A549 (cell line): ENCODE measurements at regions of chr20 and their contacts with region 1.

Region 1: DNA sequence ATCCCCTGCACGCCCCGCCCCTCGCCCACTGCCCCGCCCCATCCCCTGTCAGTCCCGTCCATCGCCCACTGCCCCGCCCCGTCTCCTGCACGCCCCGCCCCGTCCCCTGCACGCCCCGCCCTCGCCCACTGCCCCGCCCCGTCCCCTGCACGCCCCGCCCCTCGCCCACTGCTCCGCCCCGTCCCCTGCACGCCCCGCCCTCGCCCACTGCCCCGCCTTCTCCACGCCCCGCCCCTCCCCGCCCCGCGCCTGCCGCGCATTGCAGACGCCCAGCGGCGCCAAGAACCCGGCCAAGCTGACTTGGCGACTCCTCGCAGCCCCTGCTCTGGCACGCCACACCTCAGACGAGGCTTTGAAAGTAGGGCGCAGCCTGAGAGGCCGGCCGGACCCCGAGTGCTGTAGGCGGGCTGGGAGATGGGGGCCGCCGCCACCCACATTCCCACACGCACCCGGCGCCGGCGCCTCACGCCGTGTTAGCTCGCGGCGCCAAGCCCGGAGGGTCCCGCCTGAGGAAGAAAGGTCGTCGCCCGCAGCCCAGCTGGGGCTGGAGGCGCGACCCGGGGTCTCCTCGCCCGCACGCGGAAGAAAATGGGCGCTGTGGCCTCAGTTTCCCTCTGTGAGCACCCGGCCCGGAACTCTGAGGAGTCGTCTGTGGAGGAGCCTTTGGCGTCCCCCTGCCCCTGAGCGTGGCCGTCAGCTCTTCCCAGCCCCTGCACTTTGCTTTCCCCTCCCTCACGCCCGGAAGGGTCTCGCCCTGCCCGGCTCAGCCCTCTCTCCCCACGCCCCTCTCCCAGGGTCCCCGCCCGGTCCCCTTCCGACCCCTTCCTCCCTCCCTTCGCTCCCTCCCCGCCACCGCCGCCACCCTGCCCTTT is at the start of gene RAD21L1:
- DNase-seq: peak; percentile 86 to 87
- ATAC-seq: peak; percentile 86 to 88
- H3K4me3 ChIP-seq: peak within 1 kb of the TSS; percentile 87
- H3K27ac ChIP-seq: peak within 1 kb of the TSS; percentile 77 to 88
- H3K4me1 ChIP-seq: no peaks in the 10 kb centered on the region
- CTCF ChIP-seq: no peak
- EP300 ChIP-seq: no peak
- POLR2A ChIP-seq: peak; percentile 72
- RAD21 ChIP-seq: no peak
- polyA plus RNA-seq, gene RAD21L1: not detected in 2 replicates

Region 2: DNA sequence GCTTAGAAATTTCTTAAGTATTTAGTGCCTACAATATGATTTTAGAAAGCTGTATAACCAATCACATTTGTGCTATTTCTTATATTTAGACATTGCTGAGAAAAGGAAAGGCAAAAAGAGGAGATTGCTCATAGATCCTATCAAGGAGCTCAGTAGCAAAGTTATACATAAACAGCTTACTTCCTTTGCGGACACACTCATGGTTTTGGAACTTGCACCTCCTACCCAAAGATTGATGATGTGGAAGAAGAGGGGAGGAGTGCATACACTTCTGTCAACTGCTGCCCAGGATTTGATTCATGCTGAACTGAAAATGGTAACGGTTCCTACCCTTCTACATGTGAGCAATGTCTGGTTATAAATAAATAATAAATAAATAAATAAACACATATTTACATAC is 16.5 kb after region 1 on chr20:
- CTCF ChIA-PET with region 1: interaction called, 15 read pairs
- POLR2A ChIA-PET with region 1: interaction called, 3 read pairs
- DNase-seq: peak in 1 of 2 experiments; percentile 29
- ATAC-seq: peak in 1 of 2 experiments; percentile 51; a peak in 2 of 6 replicates
- H3K4me3 ChIP-seq: no peak overlapping the region
- H3K27ac ChIP-seq: no peak overlapping the region
- H3K4me1 ChIP-seq: peaks cover 5% of the 10 kb centered on the region; the same call in 1 of the 3 replicates
- CTCF ChIP-seq: no peak
- EP300 ChIP-seq: no peak
- POLR2A ChIP-seq: no peak
- RAD21 ChIP-seq: no peak

Region 3: DNA sequence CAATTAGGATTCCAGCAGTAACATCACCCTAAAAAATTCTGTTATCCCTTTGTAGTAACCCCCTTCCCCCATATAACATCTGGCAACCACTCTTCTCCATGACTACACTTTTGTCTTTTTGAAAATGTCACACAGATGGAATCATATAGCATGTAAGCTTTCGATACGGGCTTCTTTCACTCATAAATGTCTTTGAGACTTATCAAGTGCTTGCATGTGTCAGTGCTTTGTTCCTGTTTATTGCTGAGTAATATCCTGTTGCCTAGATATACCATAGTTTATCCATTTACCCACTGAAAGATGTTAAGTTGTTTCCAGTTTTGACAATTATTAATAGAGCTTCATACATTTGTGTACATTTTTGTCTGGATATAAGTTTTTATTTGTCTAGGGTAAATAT is 29.7 kb after region 1 on chr20:
- CTCF ChIA-PET with region 1: interaction called, 12 read pairs
- POLR2A ChIA-PET with region 1: no interaction called
- DNase-seq: no peak
- ATAC-seq: no peak
- H3K4me3 ChIP-seq: no peak overlapping the region
- H3K27ac ChIP-seq: no peak overlapping the region
- H3K4me1 ChIP-seq: no peaks in the 10 kb centered on the region
- CTCF ChIP-seq: no peak
- EP300 ChIP-seq: no peak
- POLR2A ChIP-seq: no peak
- RAD21 ChIP-seq: no peak